Activated CD8-positive, alpha-beta T cell treated with anti-CD3 and anti-CD28 coated beads for 36 hours (primary cell): ENCODE measurements at regions of chr7 and their contacts with region 1.

Region 1: DNA sequence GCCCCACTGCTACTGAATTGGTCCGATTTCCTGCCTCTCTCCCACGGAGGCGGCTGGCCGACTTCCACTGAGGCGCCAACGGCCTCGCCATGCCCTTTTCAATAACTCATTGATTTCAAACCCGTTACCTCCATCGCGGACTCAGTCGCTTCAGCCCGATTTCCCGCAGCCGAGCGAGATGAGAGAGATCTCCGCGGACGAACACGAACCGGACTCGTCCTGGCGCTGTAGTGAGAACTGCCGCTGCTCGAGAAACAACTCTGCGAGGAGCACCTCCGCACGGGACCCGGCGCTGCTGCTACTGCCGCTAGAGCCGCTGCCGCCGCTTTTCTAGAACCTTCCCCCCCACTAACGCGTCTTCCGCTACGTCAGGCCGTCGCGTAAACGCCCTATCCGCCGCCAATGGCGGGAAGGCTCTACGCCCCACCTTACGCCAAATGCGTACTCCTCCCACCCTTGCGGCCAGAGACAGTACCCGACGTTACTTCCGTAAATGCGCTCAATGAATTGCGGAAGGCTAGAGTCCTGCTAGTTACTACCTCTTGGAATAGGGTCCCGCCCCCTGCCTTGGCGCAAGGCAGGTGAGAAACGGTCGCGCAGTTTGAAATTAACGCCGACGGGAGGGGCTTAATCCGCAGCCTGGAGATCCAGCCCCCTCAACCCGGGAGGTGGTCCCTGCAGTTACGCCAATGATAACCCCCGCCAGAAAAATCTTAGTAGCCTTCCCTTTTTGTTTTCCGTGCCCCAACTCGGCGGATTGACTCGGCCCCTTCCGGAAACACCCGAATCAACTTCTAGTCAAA is at the start of gene HNRNPA2B1:
- DNase-seq: peak; percentile 98
- ATAC-seq: peak; percentile 73
- H3K4me3 Mint-ChIP-seq: peak within 1 kb of the TSS; percentile 100
- H3K27ac Mint-ChIP-seq: peak within 1 kb of the TSS; percentile 100
- H3K4me1 Mint-ChIP-seq: peaks cover 32% of the 10 kb centered on the region
- H3K27me3 Mint-ChIP-seq: peaks cover 3% of the 10 kb centered on the region
- CTCF ChIP-seq: no peak
- total RNA-seq, gene HNRNPA2B1: 871 to 893 TPM

Region 2: DNA sequence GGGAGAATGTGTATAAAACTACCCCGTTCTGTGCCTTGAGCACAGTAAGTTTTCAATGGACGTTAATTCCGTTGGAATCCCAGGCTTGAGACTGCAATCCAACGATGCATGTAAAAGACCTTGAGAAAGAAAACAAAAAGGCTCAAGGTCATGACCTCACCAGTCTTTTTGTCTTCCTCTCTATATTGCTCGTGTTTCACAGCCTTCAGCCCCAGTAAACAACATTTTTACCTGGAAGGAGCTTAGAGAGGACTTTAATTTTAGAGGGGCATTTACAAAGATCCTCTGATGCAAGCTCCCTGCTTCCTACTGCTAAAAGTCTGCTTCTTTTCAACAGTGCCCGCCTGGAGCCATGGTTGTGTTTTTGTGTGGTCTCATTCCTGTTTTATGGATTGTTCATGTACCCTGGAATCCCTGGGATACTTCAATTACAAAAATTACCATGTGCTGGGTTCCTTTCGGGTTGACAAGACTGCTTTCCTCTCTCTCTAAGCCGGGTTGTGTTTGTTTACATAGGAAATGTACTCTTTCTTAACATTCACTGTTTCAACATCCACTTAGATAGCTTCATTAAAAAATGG is 368.7 kb before region 1 on chr7:
- CTCF ChIA-PET with region 1: no interaction called
- POLR2A ChIA-PET with region 1: no interaction called
- intact Hi-C with region 1: no loop called
- DNase-seq: no peak
- ATAC-seq: no peak
- H3K4me3 Mint-ChIP-seq: no peak overlapping the region
- H3K27ac Mint-ChIP-seq: no peak overlapping the region
- H3K4me1 Mint-ChIP-seq: no peaks in the 10 kb centered on the region
- H3K27me3 Mint-ChIP-seq: peaks cover 11% of the 10 kb centered on the region
- CTCF ChIP-seq: no peak

Region 3: DNA sequence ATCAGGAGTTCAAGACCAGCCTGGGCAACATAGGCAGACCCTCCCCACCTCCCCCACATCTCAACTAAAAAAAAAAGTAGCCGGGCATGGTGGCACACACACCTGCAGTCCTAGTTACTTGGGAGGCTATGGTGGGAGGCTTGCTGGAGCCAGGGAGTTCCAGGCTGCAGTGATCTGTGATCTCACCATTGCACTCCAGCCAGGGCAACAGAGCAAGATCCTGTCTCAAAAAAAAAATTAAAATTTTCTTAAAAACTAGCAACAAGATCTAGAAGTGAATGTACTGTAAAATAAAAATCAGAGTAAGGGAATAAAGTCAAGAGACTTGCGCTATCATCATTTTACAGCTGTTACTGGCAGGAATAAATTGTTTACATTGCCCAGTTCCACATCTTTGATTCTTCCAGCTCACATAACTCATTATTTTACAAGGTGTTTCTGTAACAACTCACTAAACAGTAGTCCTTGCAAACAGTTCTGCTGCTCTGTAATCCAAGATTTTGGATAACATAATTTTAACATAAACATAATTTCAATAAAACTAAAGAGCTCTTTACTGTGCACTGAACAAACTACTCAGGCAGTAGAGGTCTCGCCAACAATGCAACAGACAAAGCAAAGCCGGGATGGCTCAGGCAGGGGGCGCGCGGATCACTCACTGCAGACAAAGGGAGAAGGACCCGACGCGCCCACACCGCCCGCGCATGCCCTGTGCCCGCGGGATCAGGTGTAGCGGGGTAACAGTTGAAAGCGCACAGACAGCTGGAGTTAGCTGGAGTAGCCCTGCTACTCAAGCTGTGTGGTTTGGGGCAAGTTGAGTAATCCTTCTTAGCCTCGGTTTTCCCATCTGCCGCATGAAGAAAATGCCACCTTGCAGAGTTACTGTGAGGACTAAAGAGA is 122.0 kb before region 1 on chr7:
- CTCF ChIA-PET with region 1: interaction called, 15 read pairs
- POLR2A ChIA-PET with region 1: interaction called, 5 read pairs
- intact Hi-C with region 1: no loop called
- DNase-seq: peak; percentile 92
- ATAC-seq: peak; percentile 99
- H3K4me3 Mint-ChIP-seq: no peak overlapping the region
- H3K27ac Mint-ChIP-seq: no peak overlapping the region
- H3K4me1 Mint-ChIP-seq: peaks cover 6% of the 10 kb centered on the region
- H3K27me3 Mint-ChIP-seq: peaks cover 18% of the 10 kb centered on the region
- CTCF ChIP-seq: peak; percentile 75

Region 4: GRCh38 chr7:26151953-26152781 is 48.5 kb before region 1 on chr7 and contains the start of gene NFE2L3:
- CTCF ChIA-PET with region 1: interaction called, 6 read pairs
- POLR2A ChIA-PET with region 1: interaction called, 359 read pairs
- intact Hi-C with region 1: no loop called
- DNase-seq: peak; percentile 88
- ATAC-seq: peak; percentile 72
- H3K4me3 Mint-ChIP-seq: peak within 1 kb of the TSS; percentile 96
- H3K27ac Mint-ChIP-seq: peak within 1 kb of the TSS; percentile 99
- H3K4me1 Mint-ChIP-seq: peaks cover 51% of the 10 kb centered on the region
- H3K27me3 Mint-ChIP-seq: no peaks in the 10 kb centered on the region
- CTCF ChIP-seq: no peak
- total RNA-seq, gene NFE2L3: 21.5 to 22.6 TPM

Region 5: GRCh38 chr7:26213821-26214515 is 13.3 kb after region 1 on chr7:
- CTCF ChIA-PET with region 1: interaction called, 3 read pairs
- POLR2A ChIA-PET with region 1: interaction called, 588 read pairs
- intact Hi-C with region 1: no loop called
- DNase-seq: no peak
- ATAC-seq: no peak
- H3K4me3 Mint-ChIP-seq: no peak overlapping the region
- H3K27ac Mint-ChIP-seq: peak overlapping the region; percentile 78
- H3K4me1 Mint-ChIP-seq: peaks cover 36% of the 10 kb centered on the region
- H3K27me3 Mint-ChIP-seq: no peaks in the 10 kb centered on the region
- CTCF ChIP-seq: no peak

Region 6: DNA sequence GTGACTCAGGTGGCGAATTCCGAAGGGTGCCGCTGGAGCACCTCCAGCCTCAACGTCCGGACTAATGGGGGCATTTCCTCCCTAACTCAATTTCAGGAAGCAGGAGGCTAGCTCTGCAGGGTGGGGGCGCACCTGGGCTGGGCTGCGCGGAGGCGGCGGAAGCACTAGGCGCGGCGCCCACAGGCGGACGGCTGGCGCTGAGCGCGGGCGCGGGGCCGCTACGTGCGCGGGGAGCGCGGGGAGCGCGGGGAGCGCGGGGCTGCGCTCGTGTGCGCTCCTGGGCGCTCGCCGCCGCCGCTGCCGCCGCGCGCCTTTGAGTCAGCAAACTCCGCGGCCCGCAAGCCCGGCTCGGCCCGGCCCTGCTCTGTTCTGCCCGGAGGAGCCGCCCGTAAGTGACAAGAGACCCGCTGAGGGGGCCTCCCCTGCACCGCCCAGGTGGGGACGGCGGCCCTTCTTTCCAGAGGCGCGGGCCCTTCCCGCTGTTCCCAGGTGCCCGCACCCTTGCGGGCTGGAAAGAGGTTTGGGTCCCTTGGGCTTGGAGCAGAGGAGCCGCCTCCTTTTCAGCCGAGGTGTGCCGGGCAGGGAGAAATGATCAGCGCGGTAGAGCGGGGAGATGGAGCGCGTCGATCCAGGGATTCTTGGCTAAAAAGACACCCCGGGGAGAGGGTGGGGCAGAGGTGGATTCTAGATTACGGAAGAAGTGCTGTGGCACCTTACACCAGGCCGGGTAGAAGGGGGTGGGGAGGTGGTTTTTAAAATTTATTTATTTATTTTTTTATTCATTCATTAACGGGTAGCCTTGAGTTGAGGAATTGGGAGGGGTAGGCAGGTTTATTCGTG is 91.3 kb after region 1 on chr7 and contains the start of gene SNX10:
- CTCF ChIA-PET with region 1: interaction called, 4 read pairs
- POLR2A ChIA-PET with region 1: interaction called, 43 read pairs
- intact Hi-C with region 1: loop called (anchors 2 kb)
- DNase-seq: peak; percentile 77
- ATAC-seq: peak; percentile 69
- H3K4me3 Mint-ChIP-seq: peak within 1 kb of the TSS; percentile 96
- H3K27ac Mint-ChIP-seq: peak within 1 kb of the TSS; percentile 91
- H3K4me1 Mint-ChIP-seq: peaks cover 28% of the 10 kb centered on the region
- H3K27me3 Mint-ChIP-seq: no peaks in the 10 kb centered on the region
- CTCF ChIP-seq: no peak
- total RNA-seq, gene SNX10: 47.8 to 51.1 TPM